ENCODE measurements at regions of chr4 and their contacts with region 1.

Region 1: DNA sequence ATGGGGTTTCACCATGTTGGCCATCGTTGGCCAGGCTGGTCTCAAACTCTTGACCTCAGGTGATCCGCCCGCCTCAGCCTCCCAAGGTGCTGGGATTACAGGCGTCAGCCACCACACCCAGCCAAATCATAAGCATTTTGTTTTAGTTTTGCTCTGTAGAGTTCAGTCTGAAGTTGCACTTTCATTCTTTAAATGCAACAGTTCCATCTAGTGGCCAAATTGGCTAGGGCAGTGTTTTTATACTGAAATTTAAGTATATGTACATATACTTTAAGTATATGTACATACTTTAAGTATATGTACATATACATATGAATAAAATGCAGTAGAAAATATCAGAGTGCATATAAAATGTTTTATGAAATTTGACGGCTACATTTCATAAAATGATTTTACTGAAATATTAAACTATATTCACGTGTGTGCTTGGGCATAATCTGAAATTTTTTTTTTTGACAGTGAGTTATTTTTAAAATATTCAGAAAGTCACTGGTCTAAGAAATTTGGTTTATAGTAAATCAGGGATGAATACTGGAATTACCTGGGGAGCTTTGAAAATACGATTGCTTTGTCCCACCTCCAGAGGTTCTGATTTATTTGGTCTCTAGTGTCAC is 145.5 kb downstream of the NWD2 start:
- DNase-seq: peak; percentile 31
- H3K4me3 ChIP-seq: no peak overlapping the region
- H3K27ac ChIP-seq: no peak overlapping the region
- H3K4me1 ChIP-seq: no peaks in the 10 kb centered on the region
- H3K27me3 ChIP-seq: no peaks in the 10 kb centered on the region
- CTCF ChIP-seq: peak; percentile 67 to 73 (median 70)
- EP300 ChIP-seq: no peak
- POLR2A ChIP-seq: no peak

Region 2: GRCh38 chr4:36351082-36351666 is 1038.9 kb before region 1 on chr4:
- in situ Hi-C with region 1: loop called (anchors 10 to 25 kb)
- intact Hi-C with region 1: no loop called
- DNase-seq: peak; percentile 72
- H3K4me3 ChIP-seq: no peak overlapping the region
- H3K27ac ChIP-seq: no peak overlapping the region
- H3K4me1 ChIP-seq: peaks cover 0 to 4% (median 0%) of the 10 kb centered on the region in 4 donors
- H3K27me3 ChIP-seq: no peaks in the 10 kb centered on the region
- CTCF ChIP-seq: peak; percentile 60 to 76 (median 70)
- EP300 ChIP-seq: no peak
- POLR2A ChIP-seq: no peak

Region 3: DNA sequence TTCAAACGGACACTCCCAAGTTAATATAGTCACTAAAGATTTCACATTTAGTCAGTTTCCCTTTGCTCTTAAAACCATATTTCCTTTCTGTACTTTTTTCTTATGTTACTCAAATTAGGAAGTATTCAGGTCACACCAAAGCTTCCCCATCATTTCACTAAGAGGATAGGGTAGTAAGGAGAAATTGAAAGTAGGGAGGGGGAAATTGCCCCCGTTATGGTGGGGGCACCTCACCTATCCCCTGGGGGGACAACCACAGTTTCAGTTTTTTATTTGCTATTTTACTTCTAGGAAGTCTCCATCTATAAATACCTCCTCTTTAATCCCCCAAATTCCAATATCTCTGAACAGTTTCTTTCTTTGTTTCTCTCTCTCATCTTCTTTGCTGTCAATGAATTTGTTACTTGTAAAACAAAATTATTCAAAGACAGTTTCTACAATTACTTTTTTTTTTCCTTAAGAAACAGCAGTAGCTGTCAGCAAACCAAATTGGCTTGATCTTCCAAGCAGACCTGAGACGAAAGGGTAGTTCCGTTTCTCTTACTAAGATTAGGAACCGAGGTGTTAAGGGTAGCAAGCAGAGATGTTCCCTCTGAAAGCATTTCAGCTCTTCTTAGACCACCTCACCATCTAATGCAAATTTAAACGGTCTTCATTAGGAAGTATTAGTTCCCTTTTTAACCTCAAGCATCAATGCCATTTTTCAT is 1113.8 kb after region 1 on chr4:
- in situ Hi-C with region 1: no loop called
- intact Hi-C with region 1: no loop called
- DNase-seq: no peak
- H3K4me3 ChIP-seq: no peak overlapping the region
- H3K27ac ChIP-seq: no peak overlapping the region
- H3K4me1 ChIP-seq: no peaks in the 10 kb centered on the region
- H3K27me3 ChIP-seq: no peaks in the 10 kb centered on the region
- CTCF ChIP-seq: no peak
- EP300 ChIP-seq: no peak
- POLR2A ChIP-seq: no peak

Measured in transverse colon (tissue), 4 donors.